ENCODE measurements at regions of chr19 and their contacts with region 1.

Region 1: DNA sequence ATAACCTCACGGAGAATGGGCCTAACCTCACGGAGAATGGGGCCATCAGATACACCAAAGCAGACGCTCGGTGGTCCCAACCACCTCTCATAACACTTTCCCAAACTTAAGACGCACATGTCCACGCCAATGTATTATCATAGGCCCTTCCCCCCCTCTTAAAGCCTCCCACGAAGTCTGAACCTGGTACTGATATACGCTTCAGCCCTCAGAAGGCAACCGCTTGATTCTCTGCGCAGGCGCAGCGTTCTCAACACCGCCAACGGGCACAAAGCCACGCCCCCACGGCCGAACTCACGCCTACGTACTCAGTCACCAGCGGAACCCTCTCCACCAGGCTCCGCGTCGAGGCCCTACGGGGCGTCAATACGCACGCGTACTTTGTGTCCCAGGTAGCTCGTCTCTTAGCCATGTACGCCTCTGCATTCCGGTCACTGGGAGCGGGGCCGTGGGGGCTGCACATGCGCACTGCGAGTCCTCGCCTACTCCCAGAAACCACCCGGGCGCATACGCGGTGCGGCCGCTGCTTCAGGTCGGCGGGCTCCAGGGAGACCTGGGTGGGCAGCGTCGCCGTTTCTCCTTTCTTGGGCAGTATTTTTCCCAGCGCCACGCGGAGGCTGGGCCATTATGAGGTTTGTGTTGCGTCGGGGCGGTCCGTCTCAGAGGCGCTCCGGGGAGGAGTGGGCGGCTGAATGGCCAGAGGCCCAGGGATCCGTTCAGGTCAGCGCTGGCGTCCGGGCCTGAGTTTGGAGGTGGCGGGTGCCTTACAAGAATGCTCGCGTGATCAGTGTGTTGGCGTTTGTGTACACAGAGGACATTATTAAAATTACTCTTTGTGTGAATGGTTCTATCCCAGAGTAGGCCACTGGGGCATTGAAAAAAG is 25.3 kb downstream of the ZNF582 start:
- DNase-seq: peak; percentile 88 to 90
- ATAC-seq: peak; percentile 97

Region 2: GRCh38 chr19:56341948-56342347 is 26.1 kb before region 1 on chr19:
- intact Hi-C with region 1: loop called in 1 of 2 experiments (anchors 1 kb)
- DNase-seq: no peak
- ATAC-seq: no peak